Endothelial cell of umbilical vein (primary cell): ENCODE measurements at regions of chr2 and their contacts with region 1.

Region 1: DNA sequence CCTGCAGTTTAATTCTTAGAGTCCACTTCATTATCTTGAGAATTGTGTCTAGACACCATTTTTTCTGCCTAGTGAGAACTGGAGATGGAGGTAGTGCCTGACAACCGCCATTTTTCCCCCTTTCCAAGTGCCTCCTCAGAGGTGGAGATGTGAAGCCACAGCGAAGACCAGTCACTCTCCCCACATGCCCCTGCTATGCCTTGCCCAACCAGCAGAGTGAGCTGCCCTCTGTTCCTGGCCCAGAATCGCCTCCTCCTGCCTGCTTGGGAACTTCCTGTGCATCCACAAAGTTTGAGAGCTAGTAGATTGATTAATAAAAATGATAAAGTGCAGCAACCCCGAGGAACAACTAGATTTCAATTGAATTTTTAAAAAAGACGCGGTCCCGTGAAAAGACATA is 123.3 kb downstream of the CLIP4 start:
- DNase-seq: peak; percentile 23
- H3K4me3 ChIP-seq: no peak overlapping the region
- H3K27ac ChIP-seq: no peak overlapping the region
- H3K4me1 ChIP-seq: no peaks in the 10 kb centered on the region
- H3K27me3 ChIP-seq: peaks cover 0 to 2% of the 10 kb centered on the region in 2 experiments
- CTCF ChIP-seq: peak; percentile 68 to 77
- POLR2A ChIP-seq: no peak

Region 2: GRCh38 chr2:29260151-29260772 is 21.8 kb after region 1 on chr2:
- CTCF ChIA-PET with region 1: interaction called, 17 read pairs
- POLR2A ChIA-PET with region 1: no interaction called
- dilution Hi-C with region 1: no loop called
- intact Hi-C with region 1: no loop called
- DNase-seq: peak; percentile 80
- H3K4me3 ChIP-seq: no peak overlapping the region
- H3K27ac ChIP-seq: peak overlapping the region; percentile 63
- H3K4me1 ChIP-seq: peaks cover 20% of the 10 kb centered on the region
- H3K27me3 ChIP-seq: peaks cover 2 to 6% of the 10 kb centered on the region in 2 experiments
- CTCF ChIP-seq: no peak
- POLR2A ChIP-seq: no peak

Region 3: GRCh38 chr2:29561181-29561580 is 322.7 kb after region 1 on chr2:
- CTCF ChIA-PET with region 1: no interaction called
- POLR2A ChIA-PET with region 1: no interaction called
- dilution Hi-C with region 1: no loop called
- intact Hi-C with region 1: no loop called
- DNase-seq: no peak
- H3K4me3 ChIP-seq: no peak overlapping the region
- H3K27ac ChIP-seq: no peak overlapping the region
- H3K4me1 ChIP-seq: no peaks in the 10 kb centered on the region
- H3K27me3 ChIP-seq: no peaks in the 10 kb centered on the region
- CTCF ChIP-seq: no peak
- POLR2A ChIP-seq: no peak

Region 4: GRCh38 chr2:29841386-29842004 is 603.0 kb after region 1 on chr2:
- CTCF ChIA-PET with region 1: interaction called, 4 read pairs
- POLR2A ChIA-PET with region 1: no interaction called
- dilution Hi-C with region 1: no loop called
- intact Hi-C with region 1: loop called (anchors 1 kb)
- DNase-seq: peak; percentile 18
- H3K4me3 ChIP-seq: no peak overlapping the region
- H3K27ac ChIP-seq: no peak overlapping the region
- H3K4me1 ChIP-seq: no peaks in the 10 kb centered on the region
- H3K27me3 ChIP-seq: no peaks in the 10 kb centered on the region
- CTCF ChIP-seq: peak; percentile 57 to 60
- POLR2A ChIP-seq: no peak